Mammary epithelial cell (primary cell): ENCODE measurements at regions of chr20 and their contacts with region 1.

Region 1: DNA sequence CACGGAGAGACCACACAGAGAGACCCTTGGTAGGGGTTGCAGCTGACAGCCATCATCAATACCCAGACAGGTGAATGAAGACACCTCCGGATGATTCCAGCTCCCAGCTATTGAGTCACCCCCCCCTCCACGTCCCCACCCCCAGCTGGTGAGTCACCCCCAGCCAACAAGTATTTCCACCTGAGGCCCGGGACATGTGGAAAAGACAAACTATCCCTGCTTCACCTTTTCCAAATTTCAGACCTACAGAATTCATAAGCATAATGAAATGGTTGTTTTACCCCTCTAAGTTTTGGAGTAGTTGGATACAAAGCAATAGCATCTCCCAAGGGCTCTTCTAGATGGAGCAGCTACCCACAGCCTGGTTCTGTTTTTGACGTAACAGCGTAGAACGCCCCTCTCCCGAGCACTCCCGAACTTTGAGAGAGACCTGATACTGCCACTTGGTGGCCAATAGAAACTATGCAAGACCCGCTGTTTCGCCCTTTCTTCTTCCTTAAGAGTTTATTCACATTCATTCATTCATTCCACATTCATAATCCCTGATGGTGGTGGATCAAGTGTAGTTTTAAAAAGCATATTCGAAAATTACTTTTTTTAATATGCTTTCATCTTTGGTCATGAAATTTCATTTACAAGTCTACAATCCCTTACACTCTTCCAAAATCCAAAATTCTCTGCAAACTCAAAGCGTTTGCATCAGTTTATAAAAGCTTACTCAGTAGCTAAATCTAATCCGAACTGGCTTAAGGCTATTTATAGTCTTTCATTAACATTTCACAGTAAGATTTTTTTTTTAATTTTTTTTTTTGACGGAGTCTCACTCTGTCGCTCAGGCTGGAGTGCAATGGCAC is 15.1 kb upstream of the PPP1R16B start:
- DNase-seq: peak; percentile 77
- H3K4me3 ChIP-seq: no peak overlapping the region
- H3K27ac ChIP-seq: peak overlapping the region; percentile 43
- H3K4me1 ChIP-seq: peaks cover 6% of the 10 kb centered on the region
- H3K27me3 ChIP-seq: no peaks in the 10 kb centered on the region
- CTCF ChIP-seq: peak; percentile 55 to 69

Region 2: DNA sequence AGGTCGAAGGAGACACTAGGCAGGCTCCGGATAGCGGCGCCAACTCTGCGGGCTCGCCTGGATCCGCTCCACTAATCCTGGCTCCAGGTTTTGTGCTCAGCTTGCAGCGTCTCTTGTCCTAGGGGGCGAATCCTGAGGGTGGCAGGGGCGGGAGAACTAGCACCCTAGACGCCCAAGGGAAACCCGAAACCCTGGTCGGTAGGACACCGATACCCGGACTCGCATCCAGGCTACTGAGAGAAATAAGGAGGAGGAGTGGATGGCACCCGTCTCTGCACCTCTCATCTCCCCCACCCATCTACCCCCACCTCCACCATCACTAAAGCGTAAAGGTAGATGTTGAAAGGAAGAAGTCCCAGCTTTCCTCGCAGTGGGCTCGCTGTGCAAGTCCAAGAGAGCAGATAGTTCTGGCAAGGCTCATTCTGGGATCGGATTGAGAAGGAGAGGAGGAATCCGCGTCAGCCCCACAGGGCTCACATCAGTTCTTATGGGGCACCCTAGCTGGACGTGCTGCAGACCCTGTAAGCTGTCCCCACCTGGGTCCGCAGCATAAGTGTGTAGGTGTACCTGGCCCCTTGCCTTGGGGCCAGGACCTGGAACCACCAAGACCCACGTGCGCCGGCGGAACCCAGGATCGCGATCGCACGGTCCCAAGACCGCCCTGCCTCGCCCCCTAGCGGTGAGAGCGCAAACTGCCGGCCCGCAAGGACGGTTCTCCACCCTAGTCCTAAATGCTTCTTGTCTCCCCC is 59.3 kb before region 1 on chr20:
- CTCF ChIA-PET with region 1: no interaction called
- dilution Hi-C with region 1: no loop called
- in situ Hi-C with region 1: no loop called
- intact Hi-C with region 1: loop called (anchors 1 kb)
- DNase-seq: peak; percentile 53
- H3K4me3 ChIP-seq: peak overlapping the region; percentile 14 to 32 (median 28)
- H3K27ac ChIP-seq: no peak overlapping the region
- H3K4me1 ChIP-seq: peaks cover 3% of the 10 kb centered on the region
- H3K27me3 ChIP-seq: peaks cover 46% of the 10 kb centered on the region
- CTCF ChIP-seq: peak; percentile 96 to 97

Region 3: DNA sequence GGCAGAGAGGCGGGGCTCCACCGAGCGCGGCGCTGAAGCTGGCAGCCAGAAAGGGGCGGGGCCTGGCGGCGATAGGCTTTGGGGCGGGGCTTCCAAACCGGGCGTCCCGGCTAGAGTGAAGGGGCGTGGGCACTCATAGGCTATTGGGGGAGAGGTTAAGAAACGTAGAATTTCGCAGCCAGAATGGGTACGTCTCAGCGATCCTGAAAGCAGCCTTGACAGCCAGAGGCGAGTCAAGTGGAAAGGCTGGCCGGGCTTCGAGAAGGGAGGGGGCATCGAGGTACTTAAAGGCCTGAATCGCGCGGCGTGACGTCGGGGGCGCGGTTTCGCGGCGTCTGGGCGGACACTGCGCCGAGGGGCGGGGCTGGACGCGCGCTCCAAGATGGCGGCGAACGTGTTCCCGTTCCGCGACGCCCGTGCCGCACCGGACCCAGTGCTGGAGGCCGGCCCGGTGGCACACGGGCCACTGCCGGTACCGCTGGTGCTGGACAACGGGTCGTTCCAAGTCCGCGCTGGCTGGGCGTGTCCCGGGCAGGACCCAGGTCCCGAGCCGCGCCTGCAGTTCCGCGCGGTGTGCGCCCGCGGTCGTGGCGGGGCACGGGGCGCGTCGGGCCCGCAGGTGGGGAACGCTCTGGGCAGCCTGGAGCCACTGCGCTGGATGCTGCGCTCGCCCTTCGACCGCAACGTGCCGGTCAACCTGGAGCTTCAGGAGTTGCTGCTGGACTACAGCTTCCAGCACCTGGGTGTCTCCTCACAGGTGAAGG is 42.1 kb before region 1 on chr20 and contains the start of gene ACTR5:
- CTCF ChIA-PET with region 1: interaction called, 5 read pairs
- dilution Hi-C with region 1: no loop called
- in situ Hi-C with region 1: no loop called
- intact Hi-C with region 1: loop called (anchors 1 kb)
- DNase-seq: peak; percentile 86
- H3K4me3 ChIP-seq: peak within 1 kb of the TSS; percentile 79 to 98 (median 92)
- H3K27ac ChIP-seq: peak within 1 kb of the TSS; percentile 71
- H3K4me1 ChIP-seq: peaks cover 5% of the 10 kb centered on the region
- H3K27me3 ChIP-seq: no peaks in the 10 kb centered on the region
- CTCF ChIP-seq: no peak
- total RNA-seq, gene ACTR5: 6.5 to 6.8 TPM

Region 4: DNA sequence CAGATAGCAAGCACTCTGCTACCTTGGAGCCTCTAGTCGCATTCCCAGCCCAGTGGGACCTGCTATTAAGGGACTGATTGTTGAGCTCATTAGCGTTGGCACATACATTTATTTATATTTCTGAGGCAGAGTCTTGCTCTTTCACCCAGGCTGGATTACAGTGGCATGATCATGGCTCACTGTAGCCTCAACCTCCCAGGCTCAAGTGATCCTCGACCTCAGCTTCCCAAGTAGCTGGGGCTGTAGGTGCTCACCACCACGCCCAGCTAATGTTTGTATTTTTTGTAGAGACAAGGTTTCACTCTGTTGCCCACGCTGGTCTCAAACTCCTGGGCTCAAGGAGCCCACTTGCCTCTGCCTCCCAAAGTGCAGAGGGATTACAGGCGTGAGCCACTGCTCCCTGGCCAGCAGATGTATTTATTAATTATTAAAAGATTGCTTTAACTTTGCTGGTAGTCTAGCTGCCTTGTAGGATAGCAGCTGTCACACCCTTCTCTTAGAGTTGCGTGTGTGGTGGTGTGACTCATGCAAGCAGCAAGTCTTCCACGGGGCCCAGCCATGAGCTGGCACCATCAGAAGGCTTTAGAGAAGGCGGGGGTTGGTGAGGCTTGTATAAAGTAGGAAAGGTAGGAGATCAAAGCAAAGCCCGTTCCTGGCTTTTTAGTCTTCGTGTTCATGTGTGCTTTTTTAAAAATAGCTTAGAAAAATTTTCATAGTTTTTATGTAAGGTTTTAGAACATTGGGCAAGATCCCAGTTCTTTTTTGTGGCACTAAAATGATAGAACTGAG is 25.7 kb before region 1 on chr20:
- CTCF ChIA-PET with region 1: no interaction called
- dilution Hi-C with region 1: no loop called
- in situ Hi-C with region 1: no loop called
- intact Hi-C with region 1: loop called (anchors 1 kb)
- DNase-seq: peak; percentile 90
- H3K4me3 ChIP-seq: no peak overlapping the region
- H3K27ac ChIP-seq: no peak overlapping the region
- H3K4me1 ChIP-seq: peaks cover 12% of the 10 kb centered on the region
- H3K27me3 ChIP-seq: no peaks in the 10 kb centered on the region
- CTCF ChIP-seq: no peak

Region 5: DNA sequence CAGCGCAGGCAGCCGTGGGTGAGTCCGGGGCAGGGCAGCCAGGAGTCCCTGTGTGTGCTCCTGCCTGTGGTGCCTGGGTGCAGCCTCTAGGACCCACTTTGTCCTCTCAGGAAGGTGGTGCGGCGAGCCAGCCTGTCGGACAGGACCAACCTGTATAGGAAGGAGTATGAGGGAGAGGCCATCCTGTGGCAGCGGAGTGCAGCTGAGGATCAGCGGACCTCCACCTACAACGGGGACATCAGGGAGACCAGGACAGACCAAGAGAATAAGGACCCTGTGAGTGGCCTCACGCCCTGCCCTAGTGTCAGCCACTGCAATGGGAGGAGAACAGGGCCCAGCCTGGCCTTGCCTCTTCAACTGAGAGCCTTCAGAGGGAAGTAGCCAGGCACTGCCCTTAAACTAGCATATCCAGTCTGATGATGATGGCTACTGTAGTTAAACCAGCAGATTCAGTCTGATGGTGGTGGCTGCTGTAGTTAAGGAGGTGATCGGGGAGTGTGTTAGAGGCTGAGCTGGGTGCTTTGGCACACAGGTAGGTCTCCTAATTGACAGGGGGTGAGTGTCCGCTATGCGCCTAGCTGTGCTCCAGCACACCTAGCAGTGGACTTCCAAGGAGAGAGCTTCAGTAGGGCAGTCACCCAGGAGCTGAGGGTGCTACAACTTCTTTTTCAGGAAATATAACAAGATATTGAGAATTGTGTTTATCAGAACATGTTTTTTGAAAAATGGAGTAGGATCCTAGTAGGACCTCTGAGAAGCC is 117.7 kb after region 1 on chr20:
- CTCF ChIA-PET with region 1: no interaction called
- dilution Hi-C with region 1: no loop called
- in situ Hi-C with region 1: no loop called
- intact Hi-C with region 1: no loop called
- DNase-seq: no peak
- H3K4me3 ChIP-seq: no peak overlapping the region
- H3K27ac ChIP-seq: no peak overlapping the region
- H3K4me1 ChIP-seq: no peaks in the 10 kb centered on the region
- H3K27me3 ChIP-seq: no peaks in the 10 kb centered on the region
- CTCF ChIP-seq: no peak